MCF 10A (cell line): ENCODE measurements at regions of chr11 and their contacts with region 1.

Region 1: DNA sequence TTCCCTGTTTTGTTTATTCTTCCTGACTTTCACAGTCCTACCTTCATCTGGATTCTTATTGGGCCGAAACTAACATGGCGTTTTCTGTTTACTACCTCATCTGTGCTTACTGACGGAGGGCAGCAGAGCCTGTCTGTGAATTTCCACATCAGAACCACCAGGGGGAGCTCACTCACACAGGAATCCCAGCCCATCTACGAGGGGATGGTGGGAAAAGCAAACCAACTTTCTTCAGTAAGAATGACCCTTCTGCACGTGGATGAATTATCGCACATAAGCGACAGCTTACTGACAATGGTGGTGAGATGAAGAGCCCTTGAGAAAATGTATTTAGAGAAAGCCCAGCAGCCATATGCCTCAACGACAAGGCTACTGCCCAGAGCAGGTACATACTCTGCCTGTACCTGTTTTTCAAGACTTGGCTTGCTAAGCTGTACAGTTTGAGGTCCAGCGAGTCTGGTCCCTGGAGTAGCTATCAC is 42.5 kb downstream of the LARGE2 start:
- DNase-seq: peak; percentile 73
- H3K4me3 Mint-ChIP-seq: no peak overlapping the region
- H3K27ac Mint-ChIP-seq: no peak overlapping the region
- H3K4me1 Mint-ChIP-seq: peaks cover 6% of the 10 kb centered on the region
- H3K27me3 Mint-ChIP-seq: no peaks in the 10 kb centered on the region
- CTCF ChIP-seq: peak; percentile 75

Region 2: DNA sequence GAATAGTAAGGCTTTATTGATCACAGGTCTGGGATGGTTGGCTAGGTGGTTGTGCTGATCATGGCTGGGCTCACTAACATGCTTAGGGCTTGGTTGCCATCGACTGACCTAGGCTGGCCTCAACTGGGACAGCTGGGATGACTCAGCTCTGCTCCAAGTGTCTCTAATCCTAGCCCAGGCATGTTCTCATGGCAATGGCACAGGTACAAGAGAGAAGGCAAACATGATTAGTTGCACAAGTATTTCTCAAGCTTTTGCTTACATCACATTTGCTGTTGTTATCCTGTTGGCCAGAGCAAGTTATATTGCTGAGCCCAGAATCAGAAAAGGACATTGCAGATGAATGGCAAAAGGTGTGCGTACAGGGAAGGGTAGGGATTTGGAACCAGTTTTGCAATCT is 228.5 kb before region 1 on chr11:
- CTCF ChIA-PET with region 1: no interaction called
- POLR2A ChIA-PET with region 1: no interaction called
- intact Hi-C with region 1: no loop called
- DNase-seq: peak; percentile 96
- H3K4me3 Mint-ChIP-seq: no peak overlapping the region
- H3K27ac Mint-ChIP-seq: peak overlapping the region; percentile 98
- H3K4me1 Mint-ChIP-seq: peaks cover 16% of the 10 kb centered on the region
- H3K27me3 Mint-ChIP-seq: no peaks in the 10 kb centered on the region
- CTCF ChIP-seq: no peak

Region 3: GRCh38 chr11:45899448-45900173 is 65.3 kb before region 1 on chr11:
- CTCF ChIA-PET with region 1: no interaction called
- POLR2A ChIA-PET with region 1: no interaction called
- intact Hi-C with region 1: no loop called
- DNase-seq: peak; percentile 64
- H3K4me3 Mint-ChIP-seq: peak overlapping the region; percentile 47
- H3K27ac Mint-ChIP-seq: peak overlapping the region; percentile 39
- H3K4me1 Mint-ChIP-seq: peaks cover 8% of the 10 kb centered on the region
- H3K27me3 Mint-ChIP-seq: no peaks in the 10 kb centered on the region
- CTCF ChIP-seq: no peak

Region 4: DNA sequence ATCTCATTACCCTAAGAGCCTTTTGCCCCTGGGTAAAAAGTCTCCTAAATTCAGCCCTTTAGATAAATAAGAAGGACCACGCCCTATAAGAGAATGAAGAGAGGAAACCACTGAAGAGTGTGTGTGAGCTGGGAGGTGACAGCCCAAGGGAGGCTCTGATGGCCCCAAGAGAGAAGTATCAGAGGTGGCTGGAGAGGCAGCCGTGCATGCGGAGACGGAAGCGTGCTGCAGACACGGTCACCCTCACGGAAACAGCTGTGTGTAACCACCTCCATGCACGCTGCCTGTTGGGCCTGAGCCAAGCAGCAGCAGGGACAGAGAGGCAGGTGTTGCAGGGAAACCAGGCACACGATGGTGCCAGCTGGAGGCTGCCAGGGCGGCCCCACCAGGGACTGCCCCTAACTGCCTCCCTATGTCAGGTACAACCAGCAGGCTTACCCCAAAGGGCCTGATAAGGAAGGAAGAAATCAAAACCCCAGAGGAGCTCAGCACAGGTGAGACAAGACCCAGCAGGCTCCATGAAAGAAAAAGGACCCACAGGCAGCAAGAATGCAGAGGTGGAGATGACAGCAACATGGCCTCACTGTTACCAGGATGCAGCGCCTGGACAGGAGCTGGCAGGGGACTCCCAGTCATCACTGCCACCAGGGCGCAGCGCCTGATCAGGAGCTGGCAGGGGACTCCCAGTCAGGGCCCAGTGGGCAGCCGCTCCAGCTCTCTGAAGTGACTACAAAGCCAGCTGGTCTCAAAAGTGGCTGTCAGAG is 34.7 kb before region 1 on chr11:
- CTCF ChIA-PET with region 1: interaction called, 11 read pairs
- POLR2A ChIA-PET with region 1: no interaction called
- intact Hi-C with region 1: no loop called
- DNase-seq: no peak
- H3K4me3 Mint-ChIP-seq: peak overlapping the region; percentile 8
- H3K27ac Mint-ChIP-seq: peak overlapping the region; percentile 88
- H3K4me1 Mint-ChIP-seq: peaks cover 23% of the 10 kb centered on the region
- H3K27me3 Mint-ChIP-seq: no peaks in the 10 kb centered on the region
- CTCF ChIP-seq: no peak

Region 5: DNA sequence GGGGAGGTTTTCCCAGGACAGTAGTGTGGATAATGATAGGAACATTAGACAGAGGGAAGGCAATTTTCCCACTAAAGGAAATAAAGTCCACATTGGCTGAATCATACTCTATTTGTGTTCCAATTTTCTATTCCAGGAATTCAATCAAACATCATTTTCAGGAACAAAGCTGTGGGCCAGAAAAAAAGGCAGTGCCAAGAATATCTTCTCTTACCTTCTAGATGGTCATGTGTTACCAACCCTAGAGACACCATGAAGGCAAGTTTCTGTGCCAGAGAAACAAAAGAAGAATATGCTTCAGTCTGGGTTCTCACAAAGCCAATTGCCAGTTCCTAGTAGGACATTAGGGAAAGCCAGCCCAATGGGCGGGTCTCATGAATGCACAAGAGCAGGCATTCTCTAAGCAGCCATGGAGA is 14.9 kb before region 1 on chr11:
- CTCF ChIA-PET with region 1: interaction called, 22 read pairs
- POLR2A ChIA-PET with region 1: interaction called, 5 read pairs
- intact Hi-C with region 1: no loop called
- DNase-seq: no peak
- H3K4me3 Mint-ChIP-seq: no peak overlapping the region
- H3K27ac Mint-ChIP-seq: no peak overlapping the region
- H3K4me1 Mint-ChIP-seq: no peaks in the 10 kb centered on the region
- H3K27me3 Mint-ChIP-seq: no peaks in the 10 kb centered on the region
- CTCF ChIP-seq: no peak

Region 6: GRCh38 chr11:45993531-45994001 is 28.6 kb after region 1 on chr11:
- CTCF ChIA-PET with region 1: interaction called, 53 read pairs
- POLR2A ChIA-PET with region 1: interaction called, 3 read pairs
- intact Hi-C with region 1: no loop called
- DNase-seq: no peak
- H3K4me3 Mint-ChIP-seq: no peak overlapping the region
- H3K27ac Mint-ChIP-seq: no peak overlapping the region
- H3K4me1 Mint-ChIP-seq: peaks cover 12% of the 10 kb centered on the region
- H3K27me3 Mint-ChIP-seq: no peaks in the 10 kb centered on the region
- CTCF ChIP-seq: no peak

Region 7: GRCh38 chr11:46121724-46122477 is 157.0 kb after region 1 on chr11:
- CTCF ChIA-PET with region 1: interaction called, 3 read pairs
- POLR2A ChIA-PET with region 1: interaction called, 3 read pairs
- intact Hi-C with region 1: loop called (anchors 2 kb)
- DNase-seq: peak; percentile 88
- H3K4me3 Mint-ChIP-seq: peak overlapping the region; percentile 94
- H3K27ac Mint-ChIP-seq: no peak overlapping the region
- H3K4me1 Mint-ChIP-seq: peaks cover 23% of the 10 kb centered on the region
- H3K27me3 Mint-ChIP-seq: no peaks in the 10 kb centered on the region
- CTCF ChIP-seq: no peak

Region 8: DNA sequence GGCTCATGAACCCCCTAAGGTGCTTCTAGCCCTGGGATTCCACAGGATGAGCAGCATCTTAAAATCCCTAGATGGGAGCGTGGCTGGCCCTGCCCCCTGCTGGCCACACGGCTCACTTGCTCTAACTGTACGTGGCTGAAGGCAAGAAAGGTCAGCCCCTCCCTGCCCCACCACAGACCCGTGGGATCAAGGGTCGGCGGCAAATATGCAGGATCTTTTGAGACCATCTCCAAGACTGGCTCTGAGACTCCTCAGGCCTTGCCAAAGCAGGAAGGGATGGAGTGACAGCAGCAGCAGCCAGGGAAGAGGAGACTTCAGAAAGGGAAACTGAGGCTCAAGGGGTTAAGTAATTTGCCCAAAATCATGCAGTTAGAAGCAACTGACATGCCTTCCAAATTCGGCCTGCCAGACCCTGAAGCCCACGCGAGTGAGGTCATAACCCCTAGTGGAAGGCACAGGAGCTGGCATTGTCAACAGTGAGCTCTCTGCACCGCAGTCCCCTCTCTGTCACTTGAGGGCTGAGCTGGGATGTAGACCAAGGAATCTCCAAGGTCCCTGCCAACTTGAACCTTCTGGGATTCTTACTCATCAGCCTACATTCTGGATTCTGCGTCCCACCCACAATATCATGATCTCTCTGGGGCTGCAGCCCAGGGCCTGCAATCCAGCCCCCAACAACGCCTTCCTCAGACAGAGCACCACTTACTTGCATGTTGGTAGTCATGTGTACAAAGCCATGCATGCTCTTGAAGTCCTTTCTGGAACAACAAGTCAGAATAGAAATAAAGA is 343.9 kb after region 1 on chr11:
- CTCF ChIA-PET with region 1: interaction called, 23 read pairs
- POLR2A ChIA-PET with region 1: interaction called, 3 read pairs
- intact Hi-C with region 1: loop called (anchors 1 kb)
- DNase-seq: peak; percentile 68
- H3K4me3 Mint-ChIP-seq: no peak overlapping the region
- H3K27ac Mint-ChIP-seq: no peak overlapping the region
- H3K4me1 Mint-ChIP-seq: peaks cover 17% of the 10 kb centered on the region
- H3K27me3 Mint-ChIP-seq: no peaks in the 10 kb centered on the region
- CTCF ChIP-seq: peak; percentile 86